PC-9 (cell line): ENCODE measurements at regions of chr6 and their contacts with region 1.

Region 1: DNA sequence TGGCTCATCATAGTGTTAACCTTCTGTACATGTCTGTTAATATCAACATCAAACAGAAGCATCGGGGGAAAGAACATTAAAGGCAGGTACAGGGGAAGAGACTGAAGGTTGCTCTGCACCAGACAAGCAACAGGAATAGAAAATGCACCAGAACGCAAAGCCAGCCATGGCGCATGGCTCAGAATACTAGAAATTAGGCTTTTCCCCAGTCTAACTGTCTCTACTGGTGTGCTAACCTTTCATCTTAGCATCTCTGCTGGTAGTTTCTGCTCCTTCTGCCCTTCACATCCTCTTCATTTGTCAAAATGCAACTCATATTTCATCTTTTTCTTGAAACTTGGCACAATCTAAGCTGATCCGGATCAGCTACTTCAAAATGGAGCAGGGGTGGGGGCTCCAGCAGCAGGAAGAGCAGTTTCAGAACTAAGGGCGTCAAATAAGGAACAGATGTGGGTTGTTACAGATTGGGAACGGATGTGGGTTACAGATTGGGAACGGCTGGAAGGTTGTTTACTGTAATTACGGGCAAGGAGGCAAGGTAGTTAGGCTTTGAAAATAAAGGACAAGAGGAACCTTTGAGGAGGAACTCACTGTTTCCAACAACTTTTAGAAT is 13.1 kb upstream of the RNASET2 start:
- DNase-seq: no peak
- H3K4me3 ChIP-seq: no peak overlapping the region
- H3K27ac ChIP-seq: no peak overlapping the region
- H3K4me1 ChIP-seq: no peaks in the 10 kb centered on the region
- H3K27me3 ChIP-seq: no peaks in the 10 kb centered on the region
- CTCF ChIP-seq: no peak

Region 2: DNA sequence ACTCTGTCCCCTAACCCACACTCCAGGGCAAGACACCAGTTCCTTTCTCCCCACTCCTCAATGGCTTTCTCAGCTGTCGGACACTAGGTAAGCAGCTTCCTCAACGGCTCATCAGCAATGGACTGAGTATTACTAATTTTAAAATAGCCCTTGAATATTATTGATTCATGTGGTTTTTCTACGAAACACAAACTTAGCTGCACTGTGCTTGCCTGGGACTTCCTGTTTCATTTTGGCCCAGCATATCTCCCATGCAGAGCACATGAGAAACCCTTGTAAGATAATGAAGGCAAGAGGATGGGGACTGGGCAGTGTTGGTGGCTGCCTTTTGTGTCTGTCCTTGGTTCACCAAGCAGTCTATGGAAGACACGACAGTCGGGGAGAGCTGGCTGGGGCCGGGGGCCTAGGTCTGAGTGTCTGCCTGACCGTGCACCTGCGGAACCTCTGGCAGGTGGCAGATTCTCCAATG is 62.1 kb before region 1 on chr6:
- CTCF ChIA-PET with region 1: no interaction called
- POLR2A ChIA-PET with region 1: no interaction called
- intact Hi-C with region 1: no loop called
- DNase-seq: no peak
- H3K4me3 ChIP-seq: no peak overlapping the region
- H3K27ac ChIP-seq: no peak overlapping the region
- H3K4me1 ChIP-seq: no peaks in the 10 kb centered on the region
- H3K27me3 ChIP-seq: no peaks in the 10 kb centered on the region
- CTCF ChIP-seq: no peak

Region 3: GRCh38 chr6:167872538-167873210 is 903.2 kb after region 1 on chr6:
- CTCF ChIA-PET with region 1: no interaction called
- POLR2A ChIA-PET with region 1: interaction called, 29 read pairs
- intact Hi-C with region 1: no loop called
- DNase-seq: no peak
- H3K4me3 ChIP-seq: no peak overlapping the region
- H3K27ac ChIP-seq: no peak overlapping the region
- H3K4me1 ChIP-seq: no peaks in the 10 kb centered on the region
- H3K27me3 ChIP-seq: no peaks in the 10 kb centered on the region
- CTCF ChIP-seq: no peak